ENCODE measurements at regions of chr10 and their contacts with region 1.

Region 1: DNA sequence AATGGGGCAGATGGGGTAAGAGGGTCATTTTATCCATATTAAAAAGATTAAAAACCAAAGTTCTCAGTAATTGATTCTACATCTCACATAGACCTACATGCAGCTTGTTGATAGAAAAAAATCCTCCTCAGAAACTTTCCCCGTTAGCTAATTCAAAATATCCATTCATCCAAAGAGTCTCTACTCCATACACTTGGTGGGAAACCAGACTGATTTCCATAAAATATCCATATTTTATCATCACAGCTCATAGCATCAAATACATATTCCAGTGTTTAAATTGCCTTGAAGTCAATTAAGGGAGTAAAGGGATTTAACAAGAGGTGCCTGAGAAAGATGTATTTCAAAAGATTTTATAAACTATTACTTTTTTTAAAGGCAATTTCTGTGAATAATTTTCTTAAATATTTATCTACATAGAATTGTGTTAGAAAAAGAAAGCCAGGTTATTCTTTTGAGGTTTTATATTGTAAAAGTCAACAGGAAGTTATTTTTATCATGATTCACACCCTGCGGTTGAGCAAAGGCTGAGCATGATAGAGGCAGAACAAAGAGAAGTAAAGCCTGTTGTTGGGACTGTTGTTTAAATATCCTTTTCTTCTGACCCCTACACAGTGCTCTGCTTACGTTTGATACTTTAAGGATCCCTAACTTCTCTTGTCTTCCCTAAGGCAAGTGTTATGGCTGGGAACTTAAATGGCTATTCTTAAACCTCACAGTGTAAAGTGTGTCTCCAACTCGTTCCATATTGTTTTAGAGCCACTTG is 266.7 kb downstream of the PRKG1 start:
- DNase-seq: peak; percentile 91
- ATAC-seq: peak; percentile 100
- H3K4me3 ChIP-seq: no peak overlapping the region
- H3K27ac ChIP-seq: peak overlapping the region; percentile 4
- H3K4me1 ChIP-seq: peaks cover 15% of the 10 kb centered on the region
- H3K27me3 ChIP-seq: no peaks in the 10 kb centered on the region
- CTCF ChIP-seq: no peak

Region 2: GRCh38 chr10:51369903-51370302 is 28.9 kb after region 1 on chr10:
- CTCF ChIA-PET with region 1: no interaction called
- POLR2A ChIA-PET with region 1: no interaction called
- intact Hi-C with region 1: loop called (anchors 2 kb)
- DNase-seq: peak; percentile 97
- ATAC-seq: peak; percentile 100
- H3K4me3 ChIP-seq: no peak overlapping the region
- H3K27ac ChIP-seq: peak overlapping the region; percentile 30
- H3K4me1 ChIP-seq: peaks cover 12% of the 10 kb centered on the region
- H3K27me3 ChIP-seq: no peaks in the 10 kb centered on the region
- CTCF ChIP-seq: no peak